Endothelial cell of umbilical vein (primary cell): ENCODE measurements at regions of chr7 and their contacts with region 1.

Region 1: DNA sequence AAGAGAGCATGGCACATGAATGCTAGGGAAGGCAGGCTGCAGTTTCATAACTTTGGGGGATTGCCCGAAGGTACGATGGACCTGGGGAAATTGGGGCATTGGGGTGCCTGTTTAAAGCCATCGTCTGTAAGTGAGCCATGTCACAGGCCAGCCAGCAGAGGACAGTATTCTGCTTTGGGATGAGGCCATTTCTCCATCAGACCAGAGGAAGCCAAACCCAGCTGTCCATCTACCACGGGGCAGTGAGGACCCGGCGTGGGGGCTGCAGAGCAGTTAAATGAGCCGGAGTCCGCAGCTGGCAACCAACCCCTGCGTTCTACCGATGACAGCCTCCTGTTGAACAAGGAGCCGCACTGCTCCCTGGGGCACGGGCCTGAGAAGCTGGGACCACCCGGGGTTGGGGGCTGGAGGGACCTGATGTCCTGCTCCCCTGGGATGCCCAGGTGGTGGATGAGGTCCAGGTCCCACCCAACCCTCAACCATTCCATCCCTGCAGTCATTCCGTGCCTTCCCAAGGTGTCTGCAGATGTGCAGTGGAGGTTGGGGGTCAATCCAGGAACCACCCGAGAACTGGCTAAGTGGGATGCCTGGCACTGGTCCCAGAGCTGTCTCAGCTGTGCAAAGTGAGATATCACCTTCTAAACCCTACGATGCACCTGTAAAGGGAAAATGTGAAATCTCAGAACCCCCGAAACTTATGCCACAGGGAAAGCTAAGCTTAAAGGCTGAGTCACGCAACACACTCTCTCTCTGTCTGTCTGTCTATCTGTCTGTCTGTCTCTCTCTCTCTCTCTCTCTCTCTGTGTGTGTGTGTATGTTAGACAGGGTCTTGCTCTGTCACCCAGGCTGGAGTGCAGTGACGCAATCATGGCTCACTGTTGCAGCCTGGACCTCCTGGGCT is 12.1 kb upstream of the RHBDD2 start:
- DNase-seq: peak; percentile 66
- H3K4me3 ChIP-seq: no peak overlapping the region
- H3K27ac ChIP-seq: no peak overlapping the region
- H3K4me1 ChIP-seq: no peaks in the 10 kb centered on the region
- H3K27me3 ChIP-seq: no peaks in the 10 kb centered on the region
- CTCF ChIP-seq: peak; percentile 84 to 95
- POLR2A ChIP-seq: no peak

Region 2: GRCh38 chr7:75727881-75728592 is 138.7 kb before region 1 on chr7:
- CTCF ChIA-PET with region 1: no interaction called
- POLR2A ChIA-PET with region 1: no interaction called
- dilution Hi-C with region 1: no loop called
- intact Hi-C with region 1: no loop called
- DNase-seq: peak; percentile 28
- H3K4me3 ChIP-seq: no peak overlapping the region
- H3K27ac ChIP-seq: no peak overlapping the region
- H3K4me1 ChIP-seq: no peaks in the 10 kb centered on the region
- H3K27me3 ChIP-seq: no peaks in the 10 kb centered on the region
- CTCF ChIP-seq: no peak
- POLR2A ChIP-seq: no peak

Region 3: DNA sequence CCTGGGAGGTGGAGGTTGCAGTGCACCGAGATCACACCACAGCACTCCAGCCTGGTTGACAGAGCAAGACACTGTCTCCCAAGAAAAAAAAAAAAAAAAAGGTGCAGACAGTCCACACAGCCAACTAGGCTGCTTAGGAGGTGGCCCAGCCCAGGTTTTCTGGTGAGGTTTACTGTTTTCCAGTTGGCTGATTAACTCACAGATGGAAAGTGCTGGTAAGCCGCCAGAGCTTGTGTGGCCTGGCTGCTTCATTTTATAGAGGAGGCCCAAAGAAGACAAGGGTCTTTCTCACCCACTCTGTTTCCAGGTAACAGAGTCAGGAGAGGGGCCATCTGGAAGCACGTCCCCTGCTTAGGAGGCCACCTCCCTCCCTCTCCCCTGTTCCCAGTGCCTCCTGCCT is 18.3 kb after region 1 on chr7:
- CTCF ChIA-PET with region 1: no interaction called
- POLR2A ChIA-PET with region 1: no interaction called
- dilution Hi-C with region 1: no loop called
- intact Hi-C with region 1: no loop called
- DNase-seq: no peak
- H3K4me3 ChIP-seq: no peak overlapping the region
- H3K27ac ChIP-seq: no peak overlapping the region
- H3K4me1 ChIP-seq: peaks cover 2% of the 10 kb centered on the region
- H3K27me3 ChIP-seq: no peaks in the 10 kb centered on the region
- CTCF ChIP-seq: no peak
- POLR2A ChIP-seq: no peak

Region 4: DNA sequence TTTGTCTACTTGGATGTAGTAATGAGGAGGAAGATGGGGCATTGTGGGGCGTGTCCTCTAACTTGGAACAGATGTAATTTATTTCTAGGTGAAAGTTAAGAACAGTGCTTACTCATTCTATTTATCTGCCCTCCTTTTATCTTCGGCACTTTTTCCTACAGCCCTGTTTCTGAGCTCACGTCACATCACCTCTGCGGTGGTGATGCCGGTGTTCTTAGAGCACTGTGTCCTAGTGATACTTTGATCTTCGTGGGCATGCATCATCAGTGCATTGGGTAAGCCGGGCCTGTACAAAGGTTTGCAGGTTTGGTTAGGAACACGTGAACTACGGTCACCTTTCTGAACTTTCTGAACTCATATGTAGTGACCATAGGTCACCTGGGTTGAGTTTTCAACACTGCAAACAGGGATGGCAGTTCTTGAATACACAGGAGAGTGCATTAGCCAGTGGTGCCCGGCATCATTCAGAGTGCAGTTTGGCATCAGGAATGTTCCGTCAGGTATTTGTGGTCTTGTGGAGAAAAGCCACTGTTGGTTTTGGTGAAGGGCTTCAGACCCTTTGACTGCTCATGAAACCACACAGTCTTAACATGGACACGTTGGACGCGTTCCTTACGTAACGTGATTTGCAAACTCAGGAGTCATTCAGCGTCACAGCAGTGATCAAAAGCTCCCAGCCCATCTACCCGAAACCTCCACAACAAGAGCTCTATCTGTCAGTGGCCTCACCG is 53.9 kb after region 1 on chr7:
- CTCF ChIA-PET with region 1: no interaction called
- POLR2A ChIA-PET with region 1: no interaction called
- dilution Hi-C with region 1: no loop called
- intact Hi-C with region 1: no loop called
- DNase-seq: no peak
- H3K4me3 ChIP-seq: no peak overlapping the region
- H3K27ac ChIP-seq: no peak overlapping the region
- H3K4me1 ChIP-seq: peaks cover 3% of the 10 kb centered on the region
- H3K27me3 ChIP-seq: no peaks in the 10 kb centered on the region
- CTCF ChIP-seq: no peak
- POLR2A ChIP-seq: no peak

Region 5: GRCh38 chr7:76011442-76011861 is 144.7 kb after region 1 on chr7:
- CTCF ChIA-PET with region 1: interaction called, 11 read pairs
- POLR2A ChIA-PET with region 1: no interaction called
- dilution Hi-C with region 1: no loop called
- intact Hi-C with region 1: no loop called
- DNase-seq: peak; percentile 91
- H3K4me3 ChIP-seq: no peak overlapping the region
- H3K27ac ChIP-seq: peak overlapping the region; percentile 95
- H3K4me1 ChIP-seq: peaks cover 35% of the 10 kb centered on the region
- H3K27me3 ChIP-seq: no peaks in the 10 kb centered on the region
- CTCF ChIP-seq: no peak
- POLR2A ChIP-seq: no peak

Region 6: DNA sequence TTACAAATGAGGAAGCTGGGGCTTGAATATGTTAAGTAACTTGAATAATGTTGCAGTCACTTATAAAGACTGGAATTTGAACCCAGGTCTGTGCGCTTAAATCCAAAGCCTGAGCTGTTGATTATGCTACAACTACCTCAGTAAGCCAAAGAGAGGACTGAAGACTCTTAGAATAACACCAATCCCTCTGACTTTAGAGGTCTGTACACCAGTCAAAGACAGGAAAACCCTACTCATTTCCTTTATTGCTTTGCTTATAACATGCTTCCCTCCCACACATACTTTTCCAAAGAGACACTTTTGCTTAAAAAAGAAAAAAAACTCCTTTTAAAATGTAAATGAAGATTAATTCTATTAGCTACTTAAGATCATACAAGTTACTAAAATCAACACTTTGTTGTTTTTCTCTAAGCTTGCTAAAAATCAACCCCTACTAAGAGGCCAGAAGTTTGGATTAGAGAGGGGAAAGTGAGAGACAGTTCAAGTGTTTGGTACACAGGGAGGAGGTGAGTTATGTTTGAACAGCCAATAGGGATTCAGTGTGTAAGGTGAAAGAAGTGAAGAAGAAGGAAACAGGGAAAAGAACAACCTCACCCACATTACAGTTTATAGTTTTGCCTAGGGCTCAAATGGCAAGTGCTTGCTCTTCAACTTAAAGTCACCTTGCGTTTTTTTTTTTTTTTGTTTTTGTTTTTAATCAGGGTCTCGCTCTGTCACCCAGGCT is 255.9 kb after region 1 on chr7:
- CTCF ChIA-PET with region 1: interaction called, 4 read pairs
- POLR2A ChIA-PET with region 1: no interaction called
- dilution Hi-C with region 1: no loop called
- intact Hi-C with region 1: loop called (anchors 1 kb)
- DNase-seq: peak; percentile 78
- H3K4me3 ChIP-seq: no peak overlapping the region
- H3K27ac ChIP-seq: peak overlapping the region; percentile 23
- H3K4me1 ChIP-seq: peaks cover 6% of the 10 kb centered on the region
- H3K27me3 ChIP-seq: no peaks in the 10 kb centered on the region
- CTCF ChIP-seq: no peak
- POLR2A ChIP-seq: no peak